ENCODE measurements at regions of chr17 and their contacts with region 1.

Region 1: GRCh38 chr17:77214743-77215142 is 74.0 kb downstream of the SEC14L1 start:
- DNase-seq: peak; percentile 76 to 85 (median 84)
- H3K4me3 ChIP-seq: no peak overlapping the region
- H3K27ac ChIP-seq: no peak overlapping the region
- H3K4me1 ChIP-seq: peaks cover 0 to 2% (median 0%) of the 10 kb centered on the region in 4 experiments
- H3K27me3 ChIP-seq: no peaks in the 10 kb centered on the region

Region 2: DNA sequence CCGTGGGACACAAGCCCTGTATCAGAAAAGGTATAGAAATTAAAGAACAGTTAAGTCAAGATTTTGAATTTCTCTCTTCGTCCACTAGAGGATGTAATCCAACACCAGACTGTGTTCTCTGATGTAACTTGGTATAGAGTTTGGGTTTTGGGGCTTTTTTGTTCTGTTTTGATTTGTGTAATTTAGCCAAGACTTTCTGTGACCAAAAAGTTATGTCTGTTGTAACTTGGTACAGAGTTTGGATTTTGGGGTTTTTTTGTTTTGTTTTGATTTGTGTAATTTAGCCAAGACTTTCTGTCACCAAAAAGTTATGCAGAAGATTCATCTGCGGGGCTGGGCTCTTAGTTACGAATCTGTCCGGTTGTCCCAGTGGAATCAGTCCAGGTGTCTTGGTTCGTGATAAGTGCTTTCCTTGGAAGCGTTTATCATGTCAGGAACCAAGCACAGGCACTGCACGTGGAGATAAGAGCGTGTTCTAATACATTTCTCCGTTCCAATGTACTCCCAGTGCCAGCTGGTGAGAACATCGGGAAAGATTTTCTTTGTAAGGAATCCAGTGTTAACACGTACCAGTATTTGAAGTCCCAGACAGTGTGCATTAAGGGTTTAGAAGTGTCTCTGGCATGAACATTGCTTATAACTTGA is 118.1 kb before region 1 on chr17:
- CTCF ChIA-PET with region 1: interaction called, 19 read pairs
- POLR2A ChIA-PET with region 1: no interaction called
- DNase-seq: peak in 2 of 3 donors; percentile 69 to 70
- H3K4me3 ChIP-seq: no peak overlapping the region
- H3K27ac ChIP-seq: no peak overlapping the region
- H3K4me1 ChIP-seq: peaks cover 3 to 28% (median 22%) of the 10 kb centered on the region in 4 experiments
- H3K27me3 ChIP-seq: no peaks in the 10 kb centered on the region

Region 3: GRCh38 chr17:77235370-77235941 is 20.7 kb after region 1 on chr17:
- CTCF ChIA-PET with region 1: interaction called, 38 read pairs
- POLR2A ChIA-PET with region 1: no interaction called
- DNase-seq: peak; percentile 85 to 96 (median 95)
- H3K4me3 ChIP-seq: peak overlapping the region in 6 of 7 experiments; percentile 28 to 64 (median 47)
- H3K27ac ChIP-seq: peak overlapping the region in 1 of 2 experiments; percentile 34
- H3K4me1 ChIP-seq: peaks cover 9 to 28% (median 27%) of the 10 kb centered on the region in 4 experiments
- H3K27me3 ChIP-seq: no peaks in the 10 kb centered on the region

Region 4: GRCh38 chr17:77245162-77245926 is 30.6 kb after region 1 on chr17:
- CTCF ChIA-PET with region 1: interaction called, 19 read pairs
- POLR2A ChIA-PET with region 1: no interaction called
- DNase-seq: peak in 2 of 3 donors; percentile 35 to 41
- H3K4me3 ChIP-seq: peak overlapping the region in 2 of 7 experiments; percentile 19 to 50
- H3K27ac ChIP-seq: no peak overlapping the region
- H3K4me1 ChIP-seq: peaks cover 0 to 24% (median 20%) of the 10 kb centered on the region in 4 experiments
- H3K27me3 ChIP-seq: peaks cover 0 to 6% (median 0%) of the 10 kb centered on the region in 5 experiments

Region 5: DNA sequence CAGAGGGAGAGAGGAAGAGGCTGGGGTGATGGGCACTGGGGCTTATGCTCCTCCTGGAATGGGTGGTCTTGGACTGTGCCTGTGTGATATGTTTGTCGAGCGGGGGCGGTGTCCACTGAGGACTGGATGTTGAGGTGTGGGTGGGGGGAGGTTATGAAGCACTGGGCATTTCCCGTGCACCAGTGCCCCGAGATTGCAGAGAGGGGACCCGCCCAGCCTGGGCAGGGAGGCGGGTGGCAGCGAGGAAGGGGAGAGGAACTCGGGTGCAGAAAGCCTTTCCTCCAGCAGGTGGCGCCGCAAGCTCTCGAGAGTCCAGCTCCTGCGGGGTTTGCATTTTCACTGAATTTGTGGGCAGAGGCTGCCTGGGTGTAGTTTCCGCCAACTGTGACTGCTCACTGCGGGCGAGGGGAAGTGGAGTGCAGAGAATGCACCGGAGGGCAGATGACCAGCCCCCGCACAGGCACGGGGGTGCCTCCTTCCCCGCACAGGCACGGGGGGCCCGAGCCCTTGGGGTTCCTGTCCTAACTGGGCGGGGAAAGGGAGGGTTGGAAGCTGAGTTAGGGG is 116.6 kb after region 1 on chr17:
- CTCF ChIA-PET with region 1: no interaction called
- POLR2A ChIA-PET with region 1: no interaction called
- DNase-seq: peak; percentile 88 to 95 (median 94)
- H3K4me3 ChIP-seq: peak overlapping the region in 5 of 7 experiments; percentile 27 to 69 (median 54)
- H3K27ac ChIP-seq: no peak overlapping the region
- H3K4me1 ChIP-seq: peaks cover 3 to 57% (median 23%) of the 10 kb centered on the region in 4 experiments
- H3K27me3 ChIP-seq: no peaks in the 10 kb centered on the region